Panc1 (cell line): ENCODE measurements at regions of chr9 and their contacts with region 1.

Region 1: GRCh38 chr9:89602978-89603766 is 1.6 kb upstream of the GADD45G start:
- DNase-seq: no peak
- ATAC-seq: peak; percentile 62
- H3K4me3 ChIP-seq: peak overlapping the region; percentile 41 to 61
- H3K27ac ChIP-seq: no peak overlapping the region
- H3K4me1 ChIP-seq: peaks cover 5% of the 10 kb centered on the region
- H3K27me3 ChIP-seq: no peaks in the 10 kb centered on the region; the same call in 1 of the 2 replicates
- CTCF ChIP-seq: peak; percentile 80

Region 2: GRCh38 chr9:89410641-89411350 is 192.4 kb before region 1 on chr9:
- CTCF ChIA-PET with region 1: no interaction called
- POLR2A ChIA-PET with region 1: no interaction called
- in situ Hi-C with region 1: no loop called
- intact Hi-C with region 1: no loop called
- DNase-seq: no peak
- ATAC-seq: no peak
- H3K4me3 ChIP-seq: no peak overlapping the region
- H3K27ac ChIP-seq: no peak overlapping the region
- H3K4me1 ChIP-seq: no peaks in the 10 kb centered on the region
- H3K27me3 ChIP-seq: no peaks in the 10 kb centered on the region
- CTCF ChIP-seq: no peak

Region 3: GRCh38 chr9:89455356-89455824 is 147.8 kb before region 1 on chr9:
- CTCF ChIA-PET with region 1: no interaction called
- POLR2A ChIA-PET with region 1: no interaction called
- in situ Hi-C with region 1: no loop called
- intact Hi-C with region 1: no loop called
- DNase-seq: no peak
- ATAC-seq: no peak
- H3K4me3 ChIP-seq: no peak overlapping the region
- H3K27ac ChIP-seq: no peak overlapping the region
- H3K4me1 ChIP-seq: no peaks in the 10 kb centered on the region
- H3K27me3 ChIP-seq: no peaks in the 10 kb centered on the region
- CTCF ChIP-seq: no peak

Region 4: DNA sequence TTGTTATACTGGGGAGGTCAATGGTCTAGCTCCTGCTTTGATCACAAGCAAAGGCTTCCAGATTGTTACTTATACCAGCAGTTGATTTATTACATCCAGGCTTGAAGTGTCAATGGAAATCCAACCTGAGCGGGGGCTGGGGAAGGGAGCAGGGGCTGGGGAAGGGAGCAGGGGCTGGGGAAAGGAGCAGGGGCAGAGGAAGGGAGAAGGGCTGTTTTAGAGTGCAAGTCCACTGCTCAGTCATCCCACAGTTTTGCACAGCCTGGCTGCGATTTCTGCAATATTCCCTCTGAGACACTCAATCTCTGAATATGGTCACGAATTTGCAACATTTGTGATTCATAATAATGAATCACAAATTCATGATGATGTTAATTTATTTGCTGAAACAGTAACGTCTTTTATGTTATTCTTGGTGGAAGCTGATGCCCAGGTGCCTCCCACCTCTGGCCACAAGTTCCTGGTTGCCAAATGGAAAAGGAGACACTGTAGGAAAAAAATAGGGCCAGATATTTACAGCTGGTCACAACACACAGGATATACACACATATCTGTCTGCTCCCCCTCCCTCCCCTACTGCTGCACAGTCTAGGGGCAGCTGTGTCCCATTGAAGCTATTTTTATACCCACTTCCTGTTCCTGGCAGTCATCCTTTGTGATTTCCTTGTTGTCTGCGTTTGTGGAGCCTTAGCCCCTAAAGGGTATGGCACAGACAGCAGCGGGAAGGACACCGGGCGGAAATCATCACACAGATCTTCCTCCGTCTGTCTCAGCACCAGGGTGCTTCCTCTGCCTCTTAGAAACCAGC is 326.7 kb after region 1 on chr9:
- CTCF ChIA-PET with region 1: no interaction called
- POLR2A ChIA-PET with region 1: no interaction called
- in situ Hi-C with region 1: no loop called
- intact Hi-C with region 1: loop called (anchors 10 kb)
- DNase-seq: no peak
- ATAC-seq: no peak
- H3K4me3 ChIP-seq: no peak overlapping the region
- H3K27ac ChIP-seq: no peak overlapping the region
- H3K4me1 ChIP-seq: no peaks in the 10 kb centered on the region
- H3K27me3 ChIP-seq: no peaks in the 10 kb centered on the region
- CTCF ChIP-seq: no peak

Region 5: GRCh38 chr9:89999534-90000370 is 396.6 kb after region 1 on chr9:
- CTCF ChIA-PET with region 1: interaction called, 4 read pairs
- POLR2A ChIA-PET with region 1: no interaction called
- in situ Hi-C with region 1: no loop called
- intact Hi-C with region 1: loop called (anchors 2 kb)
- DNase-seq: no peak
- ATAC-seq: peak; percentile 86
- H3K4me3 ChIP-seq: peak overlapping the region in 1 of 2 experiments; percentile 41; a peak in 2 of 4 replicates
- H3K27ac ChIP-seq: peak overlapping the region; percentile 69
- H3K4me1 ChIP-seq: peaks cover 18% of the 10 kb centered on the region
- H3K27me3 ChIP-seq: no peaks in the 10 kb centered on the region
- CTCF ChIP-seq: no peak

Region 6: GRCh38 chr9:90102292-90102901 is 499.2 kb after region 1 on chr9:
- CTCF ChIA-PET with region 1: interaction called, 14 read pairs
- POLR2A ChIA-PET with region 1: no interaction called
- in situ Hi-C with region 1: no loop called
- intact Hi-C with region 1: loop called (anchors 1 kb)
- DNase-seq: peak; percentile 59
- ATAC-seq: peak; percentile 96
- H3K4me3 ChIP-seq: no peak overlapping the region
- H3K27ac ChIP-seq: no peak overlapping the region
- H3K4me1 ChIP-seq: no peaks in the 10 kb centered on the region; the same call in 1 of the 2 replicates
- H3K27me3 ChIP-seq: no peaks in the 10 kb centered on the region
- CTCF ChIP-seq: peak; percentile 79